Naive thymus-derived CD4-positive, alpha-beta T cell (primary cell): ENCODE measurements at regions of chr1 and their contacts with region 1.

Region 1: DNA sequence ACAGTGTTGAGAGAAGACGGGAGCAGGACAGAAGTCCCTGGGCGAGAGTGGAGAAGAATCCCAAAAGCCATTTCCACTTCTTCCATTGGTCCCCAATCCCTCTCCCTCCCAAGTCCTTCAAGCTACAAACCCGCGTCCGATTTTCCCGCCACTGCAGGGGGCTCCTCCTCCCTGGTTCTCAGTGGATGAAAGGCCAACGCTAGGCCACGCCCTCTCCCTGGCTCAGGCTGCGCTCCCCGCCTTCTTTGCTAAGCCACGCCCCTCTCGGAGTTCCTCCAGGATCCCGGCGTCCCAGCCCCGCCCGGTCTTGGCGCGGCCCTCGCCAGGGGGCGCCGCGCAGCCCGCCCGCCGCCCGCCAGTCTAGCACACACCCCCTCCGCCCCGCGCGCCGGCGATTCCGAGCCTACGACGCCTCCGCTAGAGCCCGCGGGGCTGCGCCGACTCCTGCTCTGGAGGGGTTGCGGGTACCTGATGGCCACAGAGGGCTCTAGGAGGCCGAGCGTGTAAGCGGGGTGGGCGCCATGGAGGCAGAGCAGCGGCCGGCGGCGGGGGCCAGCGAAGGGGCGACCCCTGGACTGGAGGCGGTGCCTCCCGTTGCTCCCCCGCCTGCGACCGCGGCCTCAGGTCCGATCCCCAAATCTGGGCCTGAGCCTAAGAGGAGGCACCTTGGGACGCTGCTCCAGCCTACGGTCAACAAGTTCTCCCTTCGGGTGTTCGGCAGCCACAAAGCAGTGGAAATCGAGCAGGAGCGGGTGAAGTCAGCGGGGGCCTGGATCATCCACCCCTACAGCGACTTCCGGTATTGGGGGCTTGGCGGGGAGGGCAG is at the start of gene HCN3:
- DNase-seq: peak; percentile 68 to 95 (median 70)
- ATAC-seq: peak; percentile 71
- H3K4me3 ChIP-seq: peak within 1 kb of the TSS; percentile 59
- H3K4me3 Mint-ChIP-seq: peak within 1 kb of the TSS; percentile 75 to 90 (median 86)
- H3K27ac ChIP-seq: peak within 1 kb of the TSS; percentile 36
- H3K27ac Mint-ChIP-seq: peak within 1 kb of the TSS in 8 of 9 donors; percentile 44 to 83 (median 69)
- H3K4me1 ChIP-seq: peaks cover 18 to 19% of the 10 kb centered on the region in 2 donors
- H3K4me1 Mint-ChIP-seq: peaks cover 24 to 47% (median 38%) of the 10 kb centered on the region in 7 donors
- H3K27me3 ChIP-seq: no peaks in the 10 kb centered on the region
- H3K27me3 Mint-ChIP-seq: peaks cover 0 to 11% (median 0%) of the 10 kb centered on the region in 5 donors
- total RNA-seq, gene HCN3: 1.6 to 3.3 (median 2.8) TPM

Region 2: DNA sequence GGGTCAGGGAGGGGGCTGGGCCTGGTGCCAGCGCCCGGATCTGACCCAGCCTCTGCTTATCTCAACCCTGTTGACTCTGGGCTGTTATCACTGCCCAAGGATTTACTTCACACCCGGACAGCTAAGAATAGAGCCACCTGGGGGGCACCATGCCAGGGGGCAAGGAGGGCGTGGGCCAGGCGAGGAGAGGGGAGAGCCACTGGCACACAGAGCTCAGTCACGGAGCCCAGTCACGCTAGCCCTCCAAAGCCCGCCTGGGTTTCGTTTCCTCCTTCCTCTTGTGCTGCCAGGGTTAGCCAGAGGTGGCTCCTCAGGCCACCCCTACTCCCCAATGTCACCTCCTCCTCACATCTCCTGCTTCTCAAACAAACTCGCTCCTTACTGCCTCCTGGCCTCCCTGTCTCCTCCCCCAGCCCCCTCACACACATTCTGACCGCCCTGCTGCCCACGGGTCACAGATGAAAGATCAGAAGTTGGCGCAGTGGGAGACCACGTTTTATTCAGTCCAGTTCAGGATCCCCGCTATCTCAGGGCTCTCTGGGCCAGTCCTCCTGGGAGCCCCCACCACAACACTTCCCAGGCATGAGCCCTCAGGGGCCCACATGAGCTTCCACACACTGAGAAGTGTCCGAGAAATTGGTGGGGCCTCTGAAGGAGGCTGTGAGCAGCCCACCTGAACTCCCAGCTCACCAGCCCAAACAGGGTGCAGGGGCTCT is 91.8 kb before region 1 on chr1:
- CTCF ChIA-PET with region 1: no interaction called
- POLR2A ChIA-PET with region 1: no interaction called
- intact Hi-C with region 1: no loop called
- DNase-seq: no peak
- ATAC-seq: peak; percentile 87
- H3K4me3 ChIP-seq: no peak overlapping the region
- H3K4me3 Mint-ChIP-seq: no peak overlapping the region
- H3K27ac ChIP-seq: no peak overlapping the region
- H3K27ac Mint-ChIP-seq: peak overlapping the region in 1 of 9 donors; percentile 43
- H3K4me1 ChIP-seq: no peaks in the 10 kb centered on the region
- H3K4me1 Mint-ChIP-seq: peaks cover 0 to 13% (median 7%) of the 10 kb centered on the region in 7 donors
- H3K27me3 ChIP-seq: no peaks in the 10 kb centered on the region
- H3K27me3 Mint-ChIP-seq: no peaks in the 10 kb centered on the region

Region 3: GRCh38 chr1:155208541-155209311 is 68.6 kb before region 1 on chr1 and contains the start of gene MTX1:
- CTCF ChIA-PET with region 1: interaction called, 5 read pairs
- POLR2A ChIA-PET with region 1: interaction called, 3 read pairs
- intact Hi-C with region 1: loop called in 1 of 2 experiments (anchors 1 kb)
- DNase-seq: peak; percentile 83 to 91 (median 88)
- ATAC-seq: peak; percentile 89
- H3K4me3 ChIP-seq: peak within 1 kb of the TSS; percentile 100
- H3K4me3 Mint-ChIP-seq: peak within 1 kb of the TSS; percentile 81 to 92 (median 88)
- H3K27ac ChIP-seq: peak within 1 kb of the TSS; percentile 100
- H3K27ac Mint-ChIP-seq: peak within 1 kb of the TSS; percentile 92 to 99 (median 96)
- H3K4me1 ChIP-seq: peaks cover 20 to 21% of the 10 kb centered on the region in 2 donors
- H3K4me1 Mint-ChIP-seq: peaks cover 19 to 30% (median 24%) of the 10 kb centered on the region in 7 donors
- H3K27me3 ChIP-seq: no peaks in the 10 kb centered on the region
- H3K27me3 Mint-ChIP-seq: no peaks in the 10 kb centered on the region
- total RNA-seq, gene MTX1: 19.5 to 40.8 (median 22.0) TPM

Region 4: DNA sequence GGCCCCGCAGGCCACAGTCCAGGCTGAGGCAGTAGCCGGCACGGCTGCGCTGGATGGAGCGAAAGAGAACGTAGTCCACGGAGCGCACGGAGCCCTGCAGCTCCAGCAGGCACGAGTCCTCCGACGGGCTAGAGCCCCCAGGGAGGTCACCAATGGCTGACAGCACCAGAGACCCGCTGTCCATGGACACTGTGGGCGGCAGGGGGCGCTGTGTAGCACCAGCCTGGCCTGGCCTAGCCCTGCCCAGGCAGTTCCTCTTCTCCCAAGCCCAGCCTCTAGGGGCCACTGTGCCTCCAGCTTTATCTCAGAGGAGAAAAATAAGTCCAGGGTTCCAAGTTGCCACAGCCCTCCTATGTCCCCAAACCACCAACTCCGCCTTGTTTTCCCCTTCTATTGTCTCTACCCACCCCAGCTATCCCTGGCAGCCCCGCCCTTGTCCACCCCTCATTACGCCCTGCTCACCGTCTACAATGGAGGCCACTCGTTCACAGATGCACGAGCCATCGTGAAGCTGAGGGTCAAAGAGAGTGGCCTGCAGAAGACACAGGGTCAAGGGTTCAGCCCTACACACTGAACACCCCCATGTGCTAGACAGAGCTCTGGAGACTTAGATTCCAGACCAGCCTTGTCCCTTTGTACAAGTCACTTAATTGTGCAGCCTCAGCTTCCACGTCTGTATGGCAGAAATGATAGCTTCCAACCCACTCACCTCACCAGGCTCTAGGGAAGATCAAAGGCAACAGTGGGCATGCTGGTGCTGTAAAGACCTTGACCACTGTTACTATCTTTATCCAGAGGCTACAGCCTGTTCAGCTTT is 26.4 kb before region 1 on chr1:
- CTCF ChIA-PET with region 1: interaction called, 18 read pairs
- POLR2A ChIA-PET with region 1: interaction called, 3 read pairs
- intact Hi-C with region 1: loop called (anchors 1 to 2 kb)
- DNase-seq: peak; percentile 86 to 98 (median 93)
- ATAC-seq: peak; percentile 99
- H3K4me3 ChIP-seq: peak overlapping the region; percentile 54
- H3K4me3 Mint-ChIP-seq: peak overlapping the region in 9 of 10 donors; percentile 45 to 83 (median 62)
- H3K27ac ChIP-seq: peak overlapping the region; percentile 49
- H3K27ac Mint-ChIP-seq: peak overlapping the region in 7 of 9 donors; percentile 29 to 86 (median 69)
- H3K4me1 ChIP-seq: peaks cover 4 to 10% of the 10 kb centered on the region in 2 donors
- H3K4me1 Mint-ChIP-seq: peaks cover 21 to 36% (median 24%) of the 10 kb centered on the region in 7 donors
- H3K27me3 ChIP-seq: no peaks in the 10 kb centered on the region
- H3K27me3 Mint-ChIP-seq: no peaks in the 10 kb centered on the region

Region 5: GRCh38 chr1:155308493-155309422 is 31.5 kb after region 1 on chr1 and contains the start of gene FDPS:
- CTCF ChIA-PET with region 1: no interaction called
- POLR2A ChIA-PET with region 1: interaction called, 3 read pairs
- intact Hi-C with region 1: loop called (anchors 1 kb)
- DNase-seq: peak; percentile 83 to 98 (median 95)
- ATAC-seq: peak; percentile 98
- H3K4me3 ChIP-seq: peak within 1 kb of the TSS; percentile 90
- H3K4me3 Mint-ChIP-seq: peak within 1 kb of the TSS; percentile 88 to 99 (median 97)
- H3K27ac ChIP-seq: peak within 1 kb of the TSS; percentile 87
- H3K27ac Mint-ChIP-seq: peak within 1 kb of the TSS; percentile 89 to 98 (median 96)
- H3K4me1 ChIP-seq: peaks cover 11 to 20% of the 10 kb centered on the region in 2 donors
- H3K4me1 Mint-ChIP-seq: peaks cover 12 to 43% (median 27%) of the 10 kb centered on the region in 7 donors
- H3K27me3 ChIP-seq: no peaks in the 10 kb centered on the region
- H3K27me3 Mint-ChIP-seq: no peaks in the 10 kb centered on the region
- total RNA-seq, gene FDPS: 58.5 to 193 (median 79.0) TPM

Region 6: GRCh38 chr1:155688324-155689080 is 411.2 kb after region 1 on chr1 and contains the start of gene YY1AP1:
- CTCF ChIA-PET with region 1: no interaction called
- POLR2A ChIA-PET with region 1: no interaction called
- intact Hi-C with region 1: loop called in 1 of 2 experiments (anchors 10 kb)
- DNase-seq: peak; percentile 87 to 96 (median 92)
- ATAC-seq: peak; percentile 96
- H3K4me3 ChIP-seq: peak within 1 kb of the TSS; percentile 99
- H3K4me3 Mint-ChIP-seq: peak within 1 kb of the TSS; percentile 93 to 98 (median 96)
- H3K27ac ChIP-seq: peak within 1 kb of the TSS; percentile 91
- H3K27ac Mint-ChIP-seq: peak within 1 kb of the TSS; percentile 90 to 98 (median 96)
- H3K4me1 ChIP-seq: peaks cover 15 to 30% of the 10 kb centered on the region in 2 donors
- H3K4me1 Mint-ChIP-seq: peaks cover 37 to 81% (median 70%) of the 10 kb centered on the region in 7 donors
- H3K27me3 ChIP-seq: no peaks in the 10 kb centered on the region
- H3K27me3 Mint-ChIP-seq: no peaks in the 10 kb centered on the region
- total RNA-seq, gene YY1AP1: 81.2 to 130 (median 88.2) TPM